ENCODE measurements at regions of chrX and their contacts with region 1.

Region 1: DNA sequence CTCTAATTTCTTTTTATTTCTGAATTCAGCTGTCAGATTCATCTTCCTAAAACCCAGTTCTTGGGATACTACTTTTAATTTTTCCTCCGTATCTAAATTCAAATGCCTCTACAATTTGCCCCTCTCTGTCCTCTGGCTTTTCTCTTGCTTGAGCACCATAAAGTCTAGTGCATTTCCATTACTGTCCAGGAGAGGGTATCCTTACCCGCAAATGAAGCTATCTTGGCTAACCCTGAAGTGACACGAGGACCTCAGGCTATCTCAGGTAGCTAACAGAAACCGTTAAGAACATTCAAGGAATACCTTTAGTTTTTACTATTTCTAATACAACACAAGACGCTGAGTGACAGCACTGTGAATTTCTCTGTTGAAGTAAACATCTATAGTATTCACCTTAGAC is 49.3 kb upstream of the PRR32 start:
- DNase-seq: no peak
- ATAC-seq: no peak

Region 2: GRCh38 chrX:126456136-126456535 is 314.1 kb before region 1 on chrX:
- intact Hi-C with region 1: no loop called
- DNase-seq: no peak
- ATAC-seq: no peak

Region 3: GRCh38 chrX:126752239-126752638 is 18.0 kb before region 1 on chrX:
- intact Hi-C with region 1: no loop called
- DNase-seq: no peak
- ATAC-seq: no peak

Region 4: DNA sequence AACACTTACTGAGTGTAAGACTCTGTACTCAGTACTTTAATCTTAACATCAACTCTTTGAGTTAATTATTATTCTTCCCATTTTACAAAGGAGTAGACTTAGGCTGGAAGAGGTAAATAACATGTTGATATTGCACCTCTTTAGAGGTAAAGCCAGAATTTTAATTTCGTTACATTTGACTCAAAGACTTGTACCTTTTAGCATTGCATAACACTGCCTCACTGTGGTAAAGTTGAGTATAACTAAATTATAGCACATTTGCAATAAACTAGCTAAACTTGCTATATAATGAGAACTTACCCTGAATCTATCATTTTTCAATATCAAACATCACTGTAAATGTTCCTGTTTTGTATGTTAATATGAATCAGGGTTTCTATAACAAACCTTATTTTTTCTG is 267.9 kb after region 1 on chrX:
- intact Hi-C with region 1: loop called (anchors 5 kb)
- DNase-seq: no peak
- ATAC-seq: no peak